IMR-90 (cell line): ENCODE measurements at regions of chr19 and their contacts with region 1.

Region 1: DNA sequence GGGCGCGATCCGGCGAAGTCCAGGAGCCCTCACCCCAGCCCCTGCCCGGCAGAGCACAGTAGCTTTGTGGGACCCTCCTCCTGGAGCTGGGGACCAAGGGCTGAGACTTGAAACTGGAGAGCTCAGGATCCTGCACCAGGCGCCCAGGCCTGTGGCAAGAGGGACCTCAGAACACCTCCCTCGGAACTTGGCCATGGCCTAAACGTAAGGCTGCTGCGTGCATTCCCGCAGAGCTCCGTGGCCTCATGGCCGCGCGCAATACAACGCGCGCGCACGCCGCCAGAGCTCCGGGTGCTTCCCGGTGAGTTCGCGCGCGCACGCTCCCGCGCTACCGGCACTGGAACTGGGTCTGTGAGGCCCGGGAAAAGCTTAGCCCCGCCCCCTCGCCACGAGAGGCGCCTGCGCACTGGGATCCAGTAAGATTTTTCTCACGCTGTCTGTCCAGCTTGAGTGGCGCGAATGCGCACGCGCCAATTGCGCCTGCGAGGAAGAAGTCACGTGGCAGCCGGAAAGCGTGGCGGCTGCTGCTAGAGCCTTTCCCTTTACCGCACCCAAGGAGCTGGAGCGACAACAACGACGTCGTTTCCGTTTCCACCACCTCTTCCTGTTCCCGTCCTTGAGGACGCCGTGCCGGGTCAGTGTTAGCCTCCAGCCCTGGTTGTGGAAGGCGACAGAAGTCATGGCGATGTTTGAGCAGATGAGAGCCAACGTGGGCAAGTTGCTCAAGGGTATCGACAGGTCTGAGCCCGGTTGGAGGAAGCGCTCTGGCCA is at the start of gene EIF3K:
- DNase-seq: peak; percentile 99
- ATAC-seq: peak; percentile 97
- H3K4me3 ChIP-seq: peak within 1 kb of the TSS; percentile 63
- H3K27ac ChIP-seq: peak within 1 kb of the TSS; percentile 78
- H3K4me1 ChIP-seq: peaks cover 6% of the 10 kb centered on the region; the same call in 1 of the 2 replicates
- H3K27me3 ChIP-seq: no peaks in the 10 kb centered on the region
- CTCF ChIP-seq: no peak
- POLR2A ChIP-seq: peak; percentile 81
- RAD21 ChIP-seq: no peak
- total RNA-seq, gene EIF3K: 965 and 1,137 TPM in 2 replicates

Region 2: GRCh38 chr19:37572203-37572602 is 1046.6 kb before region 1 on chr19:
- CTCF ChIA-PET with region 1: no interaction called
- POLR2A ChIA-PET with region 1: no interaction called
- dilution Hi-C with region 1: no loop called
- in situ Hi-C with region 1: no loop called
- intact Hi-C with region 1: no loop called
- DNase-seq: peak; percentile 22
- ATAC-seq: no peak
- H3K4me3 ChIP-seq: no peak overlapping the region
- H3K27ac ChIP-seq: no peak overlapping the region
- H3K4me1 ChIP-seq: no peaks in the 10 kb centered on the region
- H3K27me3 ChIP-seq: no peaks in the 10 kb centered on the region
- CTCF ChIP-seq: no peak
- POLR2A ChIP-seq: no peak
- RAD21 ChIP-seq: no peak

Region 3: DNA sequence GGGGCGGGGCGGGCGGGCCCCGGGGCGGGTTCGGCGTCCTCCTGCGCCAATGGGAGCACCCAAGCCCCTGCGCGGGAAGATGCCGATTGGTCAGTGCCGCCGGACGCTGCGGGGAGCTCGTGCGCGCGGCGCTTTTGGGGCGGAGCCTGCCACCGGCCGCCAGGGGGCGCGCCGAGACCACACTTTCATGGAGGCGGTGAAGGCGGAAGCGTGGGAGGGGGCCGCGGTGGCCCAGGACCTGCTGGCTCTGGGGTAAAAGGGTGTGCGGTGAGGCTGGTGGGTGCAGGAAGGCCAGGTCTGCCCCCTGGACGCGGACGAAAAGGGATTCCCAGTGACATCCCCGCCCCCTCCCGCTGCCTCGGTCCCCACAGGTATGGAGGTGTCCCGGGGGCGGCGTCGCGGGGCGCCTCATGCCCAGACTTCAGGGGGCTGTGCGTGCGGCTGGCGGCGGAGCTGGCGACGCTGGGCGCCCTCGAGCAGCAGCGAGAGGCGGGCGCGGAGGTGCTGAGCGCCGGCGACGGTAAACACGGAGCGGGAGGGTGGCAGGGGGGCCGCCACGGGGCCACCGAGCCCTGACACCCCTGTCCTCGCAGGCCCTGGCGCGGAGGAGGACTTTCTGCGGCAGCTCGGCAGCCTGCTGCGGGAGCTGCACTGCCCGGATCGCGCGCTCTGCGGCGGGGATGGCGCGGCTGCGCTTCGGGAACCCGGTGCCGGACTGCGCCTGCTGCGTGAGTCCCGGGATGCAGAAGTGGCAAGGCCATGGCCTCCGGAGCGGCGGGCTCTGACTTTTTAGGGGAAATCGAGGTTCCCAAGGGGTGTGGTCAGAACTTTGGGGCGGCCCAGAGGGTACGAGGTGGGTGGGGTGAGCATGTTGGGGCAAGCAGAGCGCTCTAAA is 215.6 kb before region 1 on chr19 and contains the start of gene FAM98C:
- CTCF ChIA-PET with region 1: no interaction called
- POLR2A ChIA-PET with region 1: no interaction called
- dilution Hi-C with region 1: no loop called
- in situ Hi-C with region 1: no loop called
- intact Hi-C with region 1: loop called (anchors 2 kb)
- DNase-seq: peak; percentile 92
- ATAC-seq: peak; percentile 98
- H3K4me3 ChIP-seq: peak within 1 kb of the TSS; percentile 79
- H3K27ac ChIP-seq: peak within 1 kb of the TSS; percentile 69
- H3K4me1 ChIP-seq: no peaks in the 10 kb centered on the region
- H3K27me3 ChIP-seq: no peaks in the 10 kb centered on the region
- CTCF ChIP-seq: peak; percentile 98
- POLR2A ChIP-seq: peak; percentile 53; the same call in 1 of the 2 replicates
- RAD21 ChIP-seq: peak; percentile 78
- total RNA-seq, gene FAM98C: 3.6 and 4.2 TPM in 2 replicates

Region 4: DNA sequence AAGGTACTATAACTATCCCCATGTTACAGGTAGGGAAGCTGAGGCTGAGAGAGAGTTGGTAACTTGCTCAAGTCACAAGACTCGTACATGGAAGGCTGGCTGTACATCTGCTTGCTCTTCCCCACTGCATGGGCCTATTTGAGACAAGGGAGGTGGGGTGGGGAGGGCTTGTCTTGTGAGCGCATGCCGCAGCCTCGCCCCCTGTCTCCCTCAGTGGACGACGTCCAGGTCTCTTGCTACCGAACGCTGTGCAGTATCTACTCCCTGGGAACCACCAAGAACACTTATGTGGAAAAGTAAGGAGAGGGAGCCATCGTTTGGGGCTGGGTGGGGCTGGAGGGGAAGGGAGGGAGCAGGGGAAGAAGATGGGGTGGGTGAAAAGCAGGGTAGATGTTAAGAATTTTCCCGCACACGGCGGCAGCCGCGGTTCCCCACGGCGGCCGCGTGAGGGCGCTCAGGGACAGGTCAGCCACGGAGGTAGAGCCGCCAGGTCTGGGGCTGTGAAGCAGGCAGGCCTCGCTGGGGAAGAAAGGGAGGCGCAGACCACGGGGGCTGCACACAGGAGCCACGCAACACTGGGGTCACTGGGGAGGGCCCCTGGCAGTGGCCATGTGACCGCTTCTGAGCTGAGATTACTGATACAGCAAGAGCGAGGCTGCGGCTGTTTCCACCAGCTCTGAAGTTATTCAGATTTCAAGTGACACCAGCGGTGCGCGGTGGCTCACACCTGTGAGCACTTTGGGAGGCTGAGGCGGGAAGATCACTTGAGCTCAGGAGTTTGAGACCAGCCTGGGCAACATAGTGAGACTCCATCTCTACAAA is 103.8 kb before region 1 on chr19:
- CTCF ChIA-PET with region 1: no interaction called
- POLR2A ChIA-PET with region 1: no interaction called
- dilution Hi-C with region 1: no loop called
- in situ Hi-C with region 1: no loop called
- intact Hi-C with region 1: loop called (anchors 1 kb)
- DNase-seq: peak; percentile 37
- ATAC-seq: peak; percentile 99
- H3K4me3 ChIP-seq: no peak overlapping the region
- H3K27ac ChIP-seq: no peak overlapping the region
- H3K4me1 ChIP-seq: no peaks in the 10 kb centered on the region
- H3K27me3 ChIP-seq: peaks cover 15% of the 10 kb centered on the region
- CTCF ChIP-seq: peak; percentile 83
- POLR2A ChIP-seq: no peak
- RAD21 ChIP-seq: peak; percentile 90